ENCODE measurements at regions of chr3 and their contacts with region 1.

Region 1: GRCh38 chr3:30199096-30199759 is 407.2 kb upstream of the TGFBR2 start:
- DNase-seq: peak; percentile 49
- ATAC-seq: peak; percentile 61
- H3K4me3 ChIP-seq: no peak overlapping the region
- H3K27ac ChIP-seq: no peak overlapping the region
- H3K4me1 ChIP-seq: peaks cover 21% of the 10 kb centered on the region
- H3K27me3 ChIP-seq: no peaks in the 10 kb centered on the region; a peak in 1 of 5 replicates
- CTCF ChIP-seq: peak; percentile 72
- EP300 ChIP-seq: no peak
- POLR2A ChIP-seq: no peak
- RAD21 ChIP-seq: peak; percentile 62

Region 2: GRCh38 chr3:30012941-30013543 is 186.2 kb before region 1 on chr3:
- CTCF ChIA-PET with region 1: interaction called, 6 read pairs
- POLR2A ChIA-PET with region 1: no interaction called
- in situ Hi-C with region 1: no loop called
- intact Hi-C with region 1: loop called (anchors 10 kb)
- DNase-seq: peak; percentile 63
- ATAC-seq: peak; percentile 88
- H3K4me3 ChIP-seq: no peak overlapping the region
- H3K27ac ChIP-seq: no peak overlapping the region
- H3K4me1 ChIP-seq: no peaks in the 10 kb centered on the region
- H3K27me3 ChIP-seq: no peaks in the 10 kb centered on the region
- CTCF ChIP-seq: peak; percentile 77
- EP300 ChIP-seq: no peak
- POLR2A ChIP-seq: no peak
- RAD21 ChIP-seq: peak; percentile 58